AG04449 (cell line): ENCODE measurements at regions of chrX and their contacts with region 1.

Region 1: GRCh38 chrX:3940000-3940610 is 226.7 kb upstream of the PRKX start:
- DNase-seq: no peak
- H3K4me3 ChIP-seq: no peak overlapping the region
- CTCF ChIP-seq: no peak

Region 2: GRCh38 chrX:3962511-3963311 is 22.6 kb after region 1 on chrX:
- CTCF ChIA-PET with region 1: interaction called, 12 read pairs
- POLR2A ChIA-PET with region 1: no interaction called
- DNase-seq: no peak
- H3K4me3 ChIP-seq: no peak overlapping the region
- CTCF ChIP-seq: peak; percentile 3

Region 3: GRCh38 chrX:4181756-4182407 is 241.8 kb after region 1 on chrX:
- CTCF ChIA-PET with region 1: no interaction called
- POLR2A ChIA-PET with region 1: no interaction called
- DNase-seq: no peak
- H3K4me3 ChIP-seq: no peak overlapping the region
- CTCF ChIP-seq: no peak